ENCODE measurements at regions of chr11 and their contacts with region 1.

Region 1: GRCh38 chr11:132770829-132771515 is 761.3 kb downstream of the OPCML start:
- DNase-seq: no peak

Region 2: GRCh38 chr11:132840191-132840590 is 69.2 kb after region 1 on chr11:
- intact Hi-C with region 1: loop called (anchors 2 kb)
- DNase-seq: no peak

Region 3: GRCh38 chr11:132972565-132972964 is 201.6 kb after region 1 on chr11:
- intact Hi-C with region 1: no loop called
- DNase-seq: no peak

Measured in cardiac septum (tissue), 1 donor.